ENCODE measurements at regions of chr14 and their contacts with region 1.

Region 1: DNA sequence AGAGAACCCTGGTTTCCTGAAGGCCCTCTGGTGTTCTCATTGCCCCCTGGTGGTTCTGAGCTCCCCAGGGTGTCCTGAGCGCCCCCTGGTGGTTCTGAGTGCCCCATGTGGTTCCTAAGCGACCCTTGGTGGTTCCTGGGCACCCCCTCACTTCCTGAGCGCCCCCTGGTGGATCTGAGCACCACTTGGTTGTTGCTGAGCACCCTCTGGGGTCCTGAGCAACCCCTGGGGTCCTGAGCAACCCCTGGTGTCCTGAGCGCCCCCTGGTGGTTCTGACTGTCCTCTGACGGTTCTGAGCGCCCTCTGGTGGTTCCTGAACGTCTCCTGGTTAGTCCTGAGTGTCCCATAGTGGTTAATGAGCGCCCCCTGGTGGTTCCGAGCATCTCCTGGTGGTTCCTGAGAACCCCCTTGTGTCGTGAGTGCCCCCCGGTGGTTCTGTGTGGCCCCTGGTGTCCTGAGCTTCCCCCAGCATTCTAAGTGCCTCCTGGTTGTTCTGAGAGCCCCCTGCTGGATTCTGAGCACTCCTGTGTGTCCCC is 568.3 kb downstream of the TMEM121 start:
- DNase-seq: peak; percentile 79
- H3K4me3 Mint-ChIP-seq: no peak overlapping the region
- H3K27ac Mint-ChIP-seq: no peak overlapping the region
- H3K4me1 Mint-ChIP-seq: peaks cover 7% of the 10 kb centered on the region
- H3K27me3 Mint-ChIP-seq: peaks cover 27% of the 10 kb centered on the region

Region 2: DNA sequence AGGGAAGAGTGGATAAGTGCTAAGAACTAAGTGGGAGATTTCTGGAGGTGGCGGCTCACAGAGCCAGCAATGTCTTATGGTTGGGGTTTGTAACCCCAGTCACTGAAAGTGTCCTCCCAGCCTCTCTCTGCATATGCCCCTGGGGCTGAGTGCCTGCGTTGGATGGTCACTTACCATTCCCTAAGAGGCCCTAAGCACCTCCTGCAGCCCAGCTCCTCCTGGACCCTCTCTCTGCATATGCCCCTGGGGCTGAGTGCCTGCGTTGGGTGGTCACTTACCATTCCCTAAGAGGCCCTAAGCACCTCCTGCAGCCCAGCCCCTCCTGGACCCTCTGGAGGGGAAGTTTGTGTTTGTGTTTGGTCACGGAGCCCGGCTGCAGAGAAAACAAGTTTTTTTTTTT is 142.5 kb before region 1 on chr14:
- intact Hi-C with region 1: no loop called
- DNase-seq: no peak
- H3K4me3 Mint-ChIP-seq: no peak overlapping the region
- H3K27ac Mint-ChIP-seq: no peak overlapping the region
- H3K4me1 Mint-ChIP-seq: no peaks in the 10 kb centered on the region
- H3K27me3 Mint-ChIP-seq: peaks cover 23% of the 10 kb centered on the region

Region 3: GRCh38 chr14:106069804-106070625 is 24.7 kb before region 1 on chr14:
- intact Hi-C with region 1: loop called (anchors 2 kb)
- DNase-seq: no peak
- H3K4me3 Mint-ChIP-seq: no peak overlapping the region
- H3K27ac Mint-ChIP-seq: peak overlapping the region; percentile 54
- H3K4me1 Mint-ChIP-seq: peaks cover 24% of the 10 kb centered on the region
- H3K27me3 Mint-ChIP-seq: peaks cover 14% of the 10 kb centered on the region

Region 4: DNA sequence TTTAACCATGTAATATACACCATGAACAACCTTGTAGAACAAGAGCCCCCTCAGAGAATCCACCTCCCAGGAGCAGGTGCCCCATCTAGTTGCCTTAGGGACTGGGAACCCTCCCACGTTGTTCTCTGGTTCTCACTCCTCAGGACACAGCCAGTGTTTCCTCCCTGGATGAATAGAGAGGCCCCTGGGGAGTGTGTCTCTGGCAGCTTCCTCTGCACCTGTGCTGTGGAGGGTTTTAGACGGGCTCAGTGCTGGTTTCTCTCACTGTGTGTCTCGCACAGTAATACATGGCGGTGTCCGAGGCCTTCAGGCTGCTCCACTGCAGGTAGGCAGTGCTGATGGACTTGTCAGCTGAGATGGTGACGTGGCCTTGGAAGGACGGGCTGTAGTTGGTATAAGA is 13.0 kb after region 1 on chr14:
- intact Hi-C with region 1: no loop called
- DNase-seq: no peak
- H3K4me3 Mint-ChIP-seq: no peak overlapping the region
- H3K27ac Mint-ChIP-seq: no peak overlapping the region
- H3K4me1 Mint-ChIP-seq: no peaks in the 10 kb centered on the region
- H3K27me3 Mint-ChIP-seq: peaks cover 37% of the 10 kb centered on the region